ENCODE measurements at regions of chr12 and their contacts with region 1.

Region 1: DNA sequence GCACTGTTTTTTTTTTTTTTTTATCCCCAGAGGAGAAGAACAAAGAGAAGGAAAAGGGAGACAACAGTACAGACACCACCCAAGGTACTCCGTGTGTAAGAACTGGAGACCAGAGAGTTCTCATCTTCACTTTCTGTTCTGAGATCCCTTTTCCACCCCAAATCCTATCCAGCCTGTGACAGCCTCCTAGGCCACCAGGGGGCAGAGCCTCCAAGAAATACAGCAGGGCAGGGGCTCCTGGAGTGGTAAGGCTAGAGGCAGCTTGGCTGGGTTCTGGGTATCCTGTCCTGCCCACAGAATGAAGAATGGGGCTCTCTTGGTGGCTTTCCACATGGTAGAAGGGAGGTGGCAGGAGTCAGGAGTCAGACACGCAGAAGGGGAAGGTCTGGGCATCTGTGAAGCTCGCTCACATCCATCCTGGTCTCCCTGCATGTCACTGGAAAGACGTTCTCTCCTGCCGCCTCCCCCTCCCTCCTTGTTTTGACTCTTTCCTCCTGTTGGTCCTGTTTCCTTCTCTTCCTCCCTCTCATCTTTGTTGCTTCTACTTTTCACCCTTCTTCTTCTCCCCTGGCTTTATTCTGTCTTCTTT is 12.0 kb downstream of the CLSTN3 start:
- DNase-seq: peak in 1 of 2 experiments; percentile 85
- H3K4me3 ChIP-seq: no peak overlapping the region
- H3K27ac ChIP-seq: no peak overlapping the region
- H3K4me1 ChIP-seq: no peaks in the 10 kb centered on the region
- H3K27me3 ChIP-seq: no peaks in the 10 kb centered on the region
- CTCF ChIP-seq: peak; percentile 86 to 92 (median 87)
- EP300 ChIP-seq: no peak
- POLR2A ChIP-seq: no peak
- RAD21 ChIP-seq: peak; percentile 57 to 76

Region 2: DNA sequence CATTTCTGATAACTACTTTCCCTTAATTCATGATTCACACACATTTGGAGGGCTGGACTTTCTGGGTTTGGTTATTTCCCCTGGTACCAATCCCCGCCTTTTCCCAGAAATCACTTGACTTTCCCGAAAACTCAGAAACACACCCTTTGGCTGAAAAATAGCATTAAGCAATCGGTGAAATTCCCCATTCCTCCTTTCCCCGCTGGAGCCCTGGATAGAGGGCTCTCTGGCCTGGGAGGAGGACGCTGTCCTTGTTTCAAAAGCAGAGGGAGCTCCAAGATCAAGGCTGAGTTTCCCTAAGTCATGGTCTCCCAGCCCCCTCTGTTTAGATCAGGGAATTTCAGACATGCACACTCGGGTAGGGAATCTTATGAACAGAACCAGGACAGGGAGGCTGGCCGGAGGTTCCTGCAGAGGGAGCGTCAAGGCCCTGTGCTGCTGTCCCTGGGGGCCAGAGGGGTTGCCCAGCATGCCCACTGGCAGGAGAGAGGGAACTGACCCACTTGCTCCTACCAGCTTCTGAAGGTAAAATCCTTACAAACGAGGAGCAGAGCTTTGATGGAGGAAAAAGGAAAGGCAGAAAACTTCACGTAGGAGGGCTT is 81.7 kb before region 1 on chr12 and contains the start of gene C1S:
- CTCF ChIA-PET with region 1: interaction called, 16 read pairs
- POLR2A ChIA-PET with region 1: no interaction called
- DNase-seq: peak; percentile 36 to 63
- H3K4me3 ChIP-seq: no peak within 1 kb of the TSS
- H3K27ac ChIP-seq: no peak within 1 kb of the TSS
- H3K4me1 ChIP-seq: peaks cover 0 to 5% (median 2%) of the 10 kb centered on the region in 4 experiments; a peak in 3 of 7 replicates
- H3K27me3 ChIP-seq: no peaks in the 10 kb centered on the region
- CTCF ChIP-seq: peak; percentile 49 to 96 (median 78)
- EP300 ChIP-seq: no peak
- POLR2A ChIP-seq: no peak
- RAD21 ChIP-seq: peak; percentile 91 to 94
- total RNA-seq, gene C1S: 5.0 and 7.3 TPM in 2 replicates

Region 3: DNA sequence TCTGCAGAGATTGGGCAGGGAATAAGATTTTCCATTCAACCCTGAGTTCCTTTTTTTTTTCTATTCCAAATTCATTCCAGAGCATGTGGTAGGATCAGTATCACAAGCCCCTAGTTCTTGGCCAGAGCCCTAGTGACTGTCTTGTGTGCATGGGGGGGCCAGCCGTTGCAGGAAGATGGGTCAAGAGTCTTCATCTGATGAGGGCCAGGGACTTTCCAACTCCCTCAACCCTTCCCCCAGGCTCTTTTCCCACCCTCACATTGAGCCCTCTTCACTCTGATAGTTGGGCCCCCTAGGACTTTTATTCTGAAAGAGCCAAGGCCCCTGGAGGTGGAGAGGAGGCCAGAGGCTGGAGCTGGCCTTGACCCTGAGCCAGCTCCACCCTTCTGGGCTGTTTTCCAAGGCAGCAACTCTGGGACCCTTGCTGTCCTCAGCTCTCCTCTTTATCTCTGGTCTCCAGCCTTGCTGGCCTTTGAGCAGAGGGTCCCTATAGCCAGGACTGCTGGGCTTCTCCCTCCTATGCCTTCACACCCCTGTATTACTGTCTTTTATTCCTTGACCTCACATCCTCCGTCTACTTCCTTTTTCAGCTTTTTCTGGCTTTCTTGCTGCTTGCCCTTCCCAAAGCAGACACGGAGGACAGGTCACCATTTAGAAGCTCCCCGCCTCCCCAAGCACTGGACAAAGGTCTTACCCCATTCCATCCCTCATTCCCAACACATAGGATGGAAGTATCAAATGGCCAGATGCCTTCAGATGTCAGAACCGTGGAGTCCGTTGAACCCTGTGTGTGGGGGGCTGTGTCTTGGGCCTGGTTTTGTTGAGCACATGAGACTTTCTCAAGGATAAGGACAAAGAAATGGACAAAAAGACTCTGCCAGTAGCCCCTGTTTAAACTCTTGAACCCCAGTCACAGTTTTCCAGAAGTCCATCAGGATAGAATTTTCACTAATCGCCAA is 19.1 kb before region 1 on chr12:
- CTCF ChIA-PET with region 1: interaction called, 67 read pairs
- POLR2A ChIA-PET with region 1: interaction called, 6 read pairs
- DNase-seq: no peak
- H3K4me3 ChIP-seq: no peak overlapping the region
- H3K27ac ChIP-seq: no peak overlapping the region
- H3K4me1 ChIP-seq: peaks cover 0 to 3% (median 0%) of the 10 kb centered on the region in 4 experiments; a peak in 2 of 7 replicates
- H3K27me3 ChIP-seq: no peaks in the 10 kb centered on the region
- CTCF ChIP-seq: no peak
- EP300 ChIP-seq: no peak
- POLR2A ChIP-seq: no peak
- RAD21 ChIP-seq: no peak

Region 4: GRCh38 chr12:7129872-7130680 is 12.1 kb before region 1 on chr12 and contains the start of gene CLSTN3:
- CTCF ChIA-PET with region 1: interaction called, 67 read pairs
- POLR2A ChIA-PET with region 1: interaction called, 6 read pairs
- DNase-seq: peak in 1 of 2 experiments; percentile 90
- H3K4me3 ChIP-seq: peak within 1 kb of the TSS; percentile 68 to 82 (median 74)
- H3K27ac ChIP-seq: no peak within 1 kb of the TSS; the same call in 1 of the 2 replicates
- H3K4me1 ChIP-seq: peaks cover 0 to 18% (median 7%) of the 10 kb centered on the region in 4 experiments; a peak in 6 of 7 replicates
- H3K27me3 ChIP-seq: peaks cover 0 to 9% (median 5%) of the 10 kb centered on the region in 4 experiments; a peak in 5 of 7 replicates
- CTCF ChIP-seq: no peak
- EP300 ChIP-seq: no peak
- POLR2A ChIP-seq: no peak; a peak in 1 of 3 replicates
- RAD21 ChIP-seq: no peak
- total RNA-seq, gene CLSTN3: 19.9 and 20.4 TPM in 2 replicates

Region 5: GRCh38 chr12:7155481-7156034 is 13.4 kb after region 1 on chr12:
- CTCF ChIA-PET with region 1: interaction called, 151 read pairs
- POLR2A ChIA-PET with region 1: no interaction called
- DNase-seq: no peak
- H3K4me3 ChIP-seq: no peak overlapping the region
- H3K27ac ChIP-seq: no peak overlapping the region
- H3K4me1 ChIP-seq: no peaks in the 10 kb centered on the region
- H3K27me3 ChIP-seq: no peaks in the 10 kb centered on the region
- CTCF ChIP-seq: no peak
- EP300 ChIP-seq: no peak
- POLR2A ChIP-seq: no peak
- RAD21 ChIP-seq: no peak

Region 6: GRCh38 chr12:7162691-7163114 is 20.6 kb after region 1 on chr12:
- CTCF ChIA-PET with region 1: interaction called, 151 read pairs
- POLR2A ChIA-PET with region 1: no interaction called
- DNase-seq: peak; percentile 46 to 70
- H3K4me3 ChIP-seq: no peak overlapping the region; a peak in 1 of 8 replicates
- H3K27ac ChIP-seq: no peak overlapping the region
- H3K4me1 ChIP-seq: no peaks in the 10 kb centered on the region
- H3K27me3 ChIP-seq: no peaks in the 10 kb centered on the region; a peak in 2 of 7 replicates
- CTCF ChIP-seq: peak; percentile 66 to 84 (median 74)
- EP300 ChIP-seq: no peak; a peak in 1 of 3 replicates
- POLR2A ChIP-seq: no peak
- RAD21 ChIP-seq: peak; percentile 46 to 52

Region 7: DNA sequence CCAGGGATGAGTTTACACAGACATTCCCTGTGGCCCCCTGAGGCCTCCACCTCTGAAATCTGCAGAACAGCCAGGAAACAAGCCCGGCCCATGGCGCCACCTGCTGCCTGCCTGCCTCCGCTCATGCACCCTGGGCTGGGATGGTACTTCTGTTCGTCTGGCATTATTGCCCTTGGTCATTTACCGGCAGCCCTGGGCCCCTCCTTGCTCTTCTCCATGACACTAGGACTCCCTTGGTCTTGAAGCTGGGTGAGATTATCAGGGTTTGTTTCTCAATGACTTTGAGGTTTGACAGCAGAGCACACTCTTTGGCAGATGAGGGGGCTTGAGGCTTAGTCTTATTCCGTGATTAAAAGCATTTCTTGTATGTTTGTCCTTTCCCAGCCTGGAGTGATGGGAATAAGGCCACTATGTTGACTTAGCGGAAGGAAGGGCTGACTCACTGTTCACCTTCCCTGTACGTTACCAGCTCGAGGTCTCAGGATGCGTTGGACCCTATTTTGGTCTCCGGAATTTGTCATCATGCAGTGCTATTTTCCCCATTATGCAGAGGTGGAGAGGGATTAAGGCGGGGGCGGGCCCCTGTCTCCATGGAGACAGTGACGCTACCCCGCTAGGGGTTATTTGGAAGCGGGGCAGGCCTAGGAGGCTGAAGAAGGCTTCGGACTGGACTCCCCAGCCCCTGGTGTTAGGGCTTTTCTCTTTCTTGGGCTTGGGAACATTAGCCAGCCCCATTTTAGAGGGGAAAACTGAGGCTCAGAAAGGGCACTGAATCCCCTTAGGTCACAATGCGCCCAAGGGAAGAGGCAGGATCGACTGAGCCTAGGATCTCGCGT is 46.6 kb after region 1 on chr12:
- CTCF ChIA-PET with region 1: interaction called, 22 read pairs
- POLR2A ChIA-PET with region 1: no interaction called
- DNase-seq: peak; percentile 64 to 90
- H3K4me3 ChIP-seq: peak overlapping the region; percentile 62 to 89 (median 83)
- H3K27ac ChIP-seq: no peak overlapping the region
- H3K4me1 ChIP-seq: peaks cover 0 to 13% (median 3%) of the 10 kb centered on the region in 4 experiments; a peak in 4 of 7 replicates
- H3K27me3 ChIP-seq: no peaks in the 10 kb centered on the region
- CTCF ChIP-seq: peak; percentile 91 to 97 (median 94)
- EP300 ChIP-seq: no peak; a peak in 1 of 3 replicates
- POLR2A ChIP-seq: no peak
- RAD21 ChIP-seq: peak; percentile 83 to 86

Region 8: GRCh38 chr12:7219599-7220243 is 77.6 kb after region 1 on chr12:
- CTCF ChIA-PET with region 1: no interaction called
- POLR2A ChIA-PET with region 1: no interaction called
- DNase-seq: peak; percentile 34 to 69
- H3K4me3 ChIP-seq: no peak overlapping the region
- H3K27ac ChIP-seq: no peak overlapping the region
- H3K4me1 ChIP-seq: peaks cover 0 to 5% (median 3%) of the 10 kb centered on the region in 4 experiments; a peak in 6 of 7 replicates
- H3K27me3 ChIP-seq: no peaks in the 10 kb centered on the region
- CTCF ChIP-seq: peak in 2 of 3 experiments; percentile 94 to 96; a peak in 3 of 4 replicates
- EP300 ChIP-seq: no peak
- POLR2A ChIP-seq: no peak
- RAD21 ChIP-seq: peak; percentile 100

Region 9: DNA sequence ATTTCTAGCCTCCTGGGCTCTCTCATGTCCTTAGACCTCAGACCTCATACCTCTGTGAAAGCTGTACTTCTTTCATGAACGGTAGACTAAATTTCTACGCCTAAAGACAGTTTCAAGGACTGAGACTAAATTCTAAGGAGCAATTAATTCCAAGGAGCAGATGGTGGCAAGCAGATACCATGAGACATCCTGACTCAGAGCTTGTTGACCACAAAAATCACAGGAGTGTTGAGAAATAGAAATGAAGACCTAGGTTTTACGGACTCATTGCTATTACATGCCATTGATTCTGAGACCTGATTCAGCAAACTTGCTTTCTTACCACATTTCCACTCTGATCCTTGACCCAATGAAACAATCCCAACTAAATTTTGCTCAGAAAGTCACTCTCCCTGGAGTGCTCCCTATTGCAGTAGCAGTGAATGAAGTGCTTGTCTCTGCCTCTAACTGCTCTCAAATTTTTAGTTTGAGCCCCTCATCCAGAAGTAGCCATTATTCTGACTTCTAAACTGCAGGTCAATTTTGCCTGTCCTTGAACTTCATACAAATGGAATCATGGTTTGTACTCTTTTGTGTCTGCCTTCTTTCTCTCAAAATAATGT is 99.4 kb after region 1 on chr12:
- CTCF ChIA-PET with region 1: no interaction called
- POLR2A ChIA-PET with region 1: no interaction called
- DNase-seq: no peak
- H3K4me3 ChIP-seq: no peak overlapping the region
- H3K27ac ChIP-seq: no peak overlapping the region
- H3K4me1 ChIP-seq: no peaks in the 10 kb centered on the region; a peak in 1 of 7 replicates
- H3K27me3 ChIP-seq: peaks cover 0 to 1% (median 0%) of the 10 kb centered on the region in 4 experiments; a peak in 1 of 7 replicates
- CTCF ChIP-seq: no peak
- EP300 ChIP-seq: no peak
- POLR2A ChIP-seq: no peak
- RAD21 ChIP-seq: no peak

Measured in H1 (cell line).